Dorsolateral prefrontal cortex (tissue), 120 donors: ENCODE measurements at regions of chr5 and their contacts with region 1.

Region 1: DNA sequence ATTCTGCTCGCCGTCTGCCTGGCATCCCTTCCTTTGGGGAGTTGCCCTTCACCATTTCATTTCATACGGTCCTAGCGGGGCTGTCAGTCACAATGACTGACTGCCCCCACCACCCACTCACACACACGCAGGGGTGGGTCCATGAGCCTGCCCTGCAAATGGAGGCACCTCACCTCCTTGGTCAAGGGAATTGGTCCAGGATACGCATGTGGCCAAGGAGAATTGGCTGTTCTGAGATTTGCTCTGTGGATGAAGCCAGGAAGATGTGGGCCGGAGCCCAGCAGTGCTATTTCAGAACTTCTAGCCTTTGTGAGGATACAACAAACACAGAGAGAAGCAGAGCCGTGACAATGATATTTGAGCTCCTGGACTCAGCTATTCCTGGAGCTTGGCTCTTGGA is 17.0 kb downstream of the C1QTNF2 start:
- DNase-seq: peak in 8 of 10 donors; percentile 22 to 83 (median 48)
- H3K4me3 ChIP-seq: no peak overlapping the region
- H3K27ac ChIP-seq: peak overlapping the region in 1 of 59 donors; percentile 5
- H3K27me3 ChIP-seq: no peaks in the 10 kb centered on the region
- CTCF ChIP-seq: no peak

Region 2: DNA sequence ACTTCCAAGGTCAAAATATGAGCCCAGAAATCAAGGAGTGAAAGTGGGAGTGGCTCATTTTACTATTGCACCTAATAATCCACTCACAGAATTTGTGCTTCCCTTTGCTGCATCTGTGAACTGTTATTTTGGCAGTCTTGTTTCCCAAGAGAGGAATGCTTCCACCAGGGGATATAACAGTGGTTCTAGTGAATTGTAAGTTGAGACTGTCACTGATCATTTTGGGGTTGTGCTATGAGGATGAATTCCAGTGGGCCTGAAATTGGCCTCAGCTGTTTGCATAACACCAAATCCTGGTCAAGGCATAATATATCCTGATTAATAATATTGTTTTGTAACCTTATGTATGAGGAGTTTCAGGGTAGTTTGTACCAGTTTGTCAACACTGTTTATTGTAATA is 32.1 kb after region 1 on chr5:
- intact Hi-C with region 1: loop called in 1 of 2 experiments (anchors 5 kb)
- DNase-seq: no peak
- H3K4me3 ChIP-seq: no peak overlapping the region
- H3K27ac ChIP-seq: no peak overlapping the region
- H3K27me3 ChIP-seq: no peaks in the 10 kb centered on the region
- CTCF ChIP-seq: no peak